Motor neuron (in vitro differentiated cells): ENCODE measurements at regions of chr4 and their contacts with region 1.

Region 1: DNA sequence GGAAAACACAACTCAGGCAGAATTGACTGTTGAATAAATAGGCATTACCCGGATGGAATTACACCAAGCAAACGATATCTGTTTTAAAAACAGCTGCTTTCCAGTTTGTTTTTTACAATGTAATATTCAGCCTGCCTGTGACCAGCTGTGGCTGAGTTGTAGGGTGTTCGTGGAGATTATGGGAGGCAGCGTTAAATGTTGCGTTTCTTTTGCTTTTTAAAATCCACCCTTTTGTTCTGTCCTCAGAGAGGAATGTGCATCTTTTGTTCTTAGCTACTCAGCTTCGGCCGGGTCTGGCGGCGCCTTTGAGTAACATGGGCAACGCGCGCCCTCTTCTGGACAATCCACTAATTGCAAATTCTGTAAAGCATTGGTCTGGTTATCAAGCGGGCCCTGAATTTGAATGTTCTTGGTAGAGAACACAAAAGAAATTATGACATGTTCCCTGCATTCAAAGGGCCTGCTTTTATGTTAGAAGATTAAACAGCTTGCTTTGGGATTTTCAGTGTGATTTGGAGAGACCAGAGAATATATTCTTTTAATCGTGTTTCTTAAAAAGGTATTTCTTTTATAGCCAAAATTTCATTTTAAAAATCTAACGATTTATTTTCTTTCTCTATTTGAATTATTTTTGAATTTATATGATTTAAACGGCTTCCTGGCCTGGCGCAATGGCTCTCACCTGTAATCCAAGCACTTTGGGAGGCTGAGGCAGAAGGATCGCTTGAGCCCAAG is 76.3 kb upstream of the TRIM2 start:
- ATAC-seq: peak; percentile 73 to 95 (median 92)
- H3K4me3 ChIP-seq: peak overlapping the region in 4 of 5 donors; percentile 8 to 22 (median 16)
- H3K27ac ChIP-seq: peak overlapping the region in 1 of 2 donors; percentile 77
- H3K4me1 ChIP-seq: peaks cover 3 to 5% of the 10 kb centered on the region in 2 donors

Region 2: GRCh38 chr4:152843481-152844090 is 284.3 kb before region 1 on chr4:
- in situ Hi-C with region 1: loop called in 1 of 9 experiments (anchors 10 kb)
- ATAC-seq: no peak
- H3K4me3 ChIP-seq: no peak overlapping the region
- H3K27ac ChIP-seq: no peak overlapping the region
- H3K4me1 ChIP-seq: no peaks in the 10 kb centered on the region

Region 3: GRCh38 chr4:153318696-153319320 is 190.9 kb after region 1 on chr4:
- in situ Hi-C with region 1: loop called in 3 of 9 experiments (anchors 25 kb)
- ATAC-seq: peak in 7 of 8 experiments; percentile 54 to 80 (median 70)
- H3K4me3 ChIP-seq: no peak overlapping the region
- H3K27ac ChIP-seq: no peak overlapping the region
- H3K4me1 ChIP-seq: no peaks in the 10 kb centered on the region

Region 4: GRCh38 chr4:153594210-153594609 is 466.3 kb after region 1 on chr4:
- in situ Hi-C with region 1: loop called in 1 of 9 experiments (anchors 25 kb)
- ATAC-seq: peak in 1 of 8 experiments; percentile 38
- H3K4me3 ChIP-seq: no peak overlapping the region
- H3K27ac ChIP-seq: no peak overlapping the region
- H3K4me1 ChIP-seq: no peaks in the 10 kb centered on the region